Activated CD4-positive, alpha-beta memory T cell treated with anti-CD3 and anti-CD28 coated beads for 36 hours (primary cell): ENCODE measurements at regions of chr11 and their contacts with region 1.

Region 1: DNA sequence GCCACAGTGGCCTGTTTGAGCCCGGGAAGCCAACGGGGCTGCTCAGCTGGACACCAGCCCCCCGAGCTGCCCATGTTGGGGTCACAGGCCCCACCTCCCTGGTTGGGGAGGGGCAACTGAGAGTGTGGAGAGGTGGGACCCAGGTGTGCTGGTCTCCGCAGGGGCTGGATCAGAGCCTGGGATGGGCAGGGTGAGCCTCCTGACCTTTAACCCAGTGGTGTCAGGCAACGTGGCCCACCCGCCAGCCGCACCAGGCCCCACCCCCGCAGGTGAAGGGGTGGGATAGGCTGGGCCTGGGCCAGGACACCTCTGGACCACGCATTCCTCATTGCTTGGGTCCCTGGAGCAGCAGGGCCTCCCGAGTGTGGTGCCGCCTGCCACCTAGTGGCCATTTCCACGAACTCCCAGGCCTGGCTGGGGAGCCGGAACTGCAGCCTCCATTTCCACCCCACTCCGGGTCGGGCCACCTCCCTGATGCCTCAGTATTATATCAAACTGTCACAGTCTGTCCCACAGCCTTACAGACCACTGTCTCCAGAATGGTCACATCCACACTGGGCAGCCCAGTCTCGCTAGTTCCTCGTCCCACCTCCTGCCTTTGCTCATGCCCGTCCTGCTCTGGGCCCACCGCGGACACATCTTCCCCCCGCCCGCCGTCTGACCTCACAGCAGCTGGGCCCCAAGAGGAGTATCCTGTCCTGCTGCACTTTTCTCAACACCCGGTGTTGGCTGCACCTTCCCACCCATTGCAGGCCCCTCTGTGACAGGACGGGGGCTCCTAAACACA is 13.3 kb upstream of the PPP6R3 start:
- DNase-seq: peak; percentile 85
- H3K4me3 Mint-ChIP-seq: no peak overlapping the region
- H3K27ac Mint-ChIP-seq: no peak overlapping the region
- H3K4me1 Mint-ChIP-seq: peaks cover 5% of the 10 kb centered on the region
- H3K27me3 Mint-ChIP-seq: no peaks in the 10 kb centered on the region

Region 2: GRCh38 chr11:68402355-68403031 is 44.7 kb before region 1 on chr11:
- CTCF ChIA-PET with region 1: no interaction called
- POLR2A ChIA-PET with region 1: no interaction called
- intact Hi-C with region 1: loop called (anchors 2 kb)
- DNase-seq: peak; percentile 21
- H3K4me3 Mint-ChIP-seq: no peak overlapping the region
- H3K27ac Mint-ChIP-seq: no peak overlapping the region
- H3K4me1 Mint-ChIP-seq: no peaks in the 10 kb centered on the region
- H3K27me3 Mint-ChIP-seq: no peaks in the 10 kb centered on the region